AG04450 (cell line): ENCODE measurements at regions of chr14 and their contacts with region 1.

Region 1: DNA sequence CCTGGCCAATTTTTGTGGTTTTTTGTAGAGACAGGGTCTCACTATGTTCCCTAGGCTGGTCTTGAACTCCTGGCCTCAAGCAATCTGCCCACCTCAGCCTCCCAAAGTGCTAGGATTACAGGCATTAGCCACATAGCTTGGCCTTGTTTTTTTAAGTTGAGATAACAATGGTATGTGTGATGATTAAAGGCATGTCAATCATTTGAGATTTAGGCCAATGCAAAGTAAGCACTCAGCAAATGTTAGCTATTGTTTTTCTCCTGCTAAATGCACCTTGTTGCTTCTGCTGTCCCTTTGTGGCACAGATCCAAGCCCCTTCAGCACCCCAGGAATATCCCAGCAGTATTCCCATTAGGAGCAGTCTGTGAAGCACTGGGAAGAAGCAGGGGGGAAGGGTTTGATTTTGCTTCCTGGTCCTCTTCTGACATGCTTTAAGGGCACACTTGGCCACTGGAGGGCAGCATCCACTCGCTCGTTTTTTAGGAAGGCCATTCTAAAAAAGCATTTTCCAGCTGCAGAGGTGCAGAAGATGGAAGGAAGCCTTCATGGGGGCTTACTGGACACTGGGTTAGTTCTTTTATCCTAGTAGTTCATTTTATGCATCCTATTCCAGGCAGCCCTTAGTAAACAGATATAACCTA is 70.2 kb upstream of the ZFP36L1 start:
- DNase-seq: peak; percentile 55
- H3K4me3 ChIP-seq: no peak overlapping the region
- H3K27ac ChIP-seq: no peak overlapping the region
- H3K27me3 ChIP-seq: no peaks in the 10 kb centered on the region
- CTCF ChIP-seq: peak; percentile 82

Region 2: GRCh38 chr14:68814376-68815230 is 48.5 kb before region 1 on chr14:
- CTCF ChIA-PET with region 1: no interaction called
- POLR2A ChIA-PET with region 1: no interaction called
- DNase-seq: no peak
- H3K4me3 ChIP-seq: peak overlapping the region; percentile 43
- H3K27ac ChIP-seq: peak overlapping the region; percentile 95
- H3K27me3 ChIP-seq: no peaks in the 10 kb centered on the region
- CTCF ChIP-seq: no peak

Region 3: DNA sequence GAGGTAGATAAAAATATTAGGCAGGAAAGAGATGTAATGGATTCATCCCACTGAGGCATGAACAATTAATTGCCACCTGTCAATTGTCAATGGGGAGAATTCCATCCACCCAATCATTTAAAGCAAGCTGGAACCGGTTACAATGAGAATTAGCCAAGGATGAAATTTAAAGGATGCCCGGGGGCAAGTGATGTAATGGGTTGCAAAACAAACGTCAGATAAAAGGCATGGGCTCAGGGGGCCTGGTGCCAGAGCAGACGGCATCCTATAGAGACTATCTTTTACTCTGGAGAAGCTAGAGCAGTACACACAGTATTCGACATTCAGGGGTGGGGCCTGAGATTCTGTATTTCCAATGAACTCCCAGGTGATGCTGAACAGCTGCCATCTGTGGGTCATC is 10.3 kb after region 1 on chr14:
- CTCF ChIA-PET with region 1: interaction called, 16 read pairs
- POLR2A ChIA-PET with region 1: no interaction called
- DNase-seq: no peak
- H3K4me3 ChIP-seq: no peak overlapping the region
- H3K27ac ChIP-seq: no peak overlapping the region
- H3K27me3 ChIP-seq: no peaks in the 10 kb centered on the region
- CTCF ChIP-seq: no peak

Region 4: DNA sequence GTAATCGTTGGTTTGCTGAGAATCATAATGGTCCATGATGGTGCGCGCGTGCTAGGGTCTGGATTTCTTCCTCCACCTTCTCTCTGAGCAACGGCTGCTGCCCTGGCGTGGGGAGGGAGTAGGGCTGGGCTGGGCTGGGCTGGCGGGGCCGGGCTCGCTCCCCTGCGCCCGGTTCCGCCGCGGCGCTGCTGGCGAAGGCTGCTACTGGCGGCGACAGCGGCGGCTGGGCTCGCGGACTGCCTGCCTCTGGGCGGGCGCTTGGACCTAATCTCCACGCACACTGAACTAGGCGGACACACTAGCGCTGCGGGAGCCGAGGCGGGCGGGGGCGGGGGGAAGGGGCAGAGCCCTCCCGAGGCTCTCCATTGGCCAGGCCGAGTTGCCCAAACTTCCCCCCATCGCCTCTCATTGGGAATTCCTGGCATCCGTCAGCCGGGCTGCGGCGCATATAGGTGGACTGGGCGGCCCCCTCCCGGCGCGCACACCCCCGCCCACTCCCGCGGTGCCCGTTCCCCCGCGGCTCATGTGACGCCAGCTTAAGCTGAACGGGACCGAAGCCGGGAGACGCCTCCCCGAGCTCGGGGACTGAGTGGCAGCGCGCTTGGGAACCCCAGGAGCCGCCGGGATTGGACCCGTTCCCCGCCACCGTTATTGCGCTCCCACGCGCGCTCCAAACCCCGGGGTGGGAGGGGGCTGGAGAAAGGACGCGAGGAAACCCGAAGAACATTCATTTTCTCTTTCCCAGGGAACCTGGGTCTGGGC is 116.1 kb after region 1 on chr14 and contains the start of gene ACTN1:
- CTCF ChIA-PET with region 1: no interaction called
- POLR2A ChIA-PET with region 1: no interaction called
- DNase-seq: peak; percentile 94
- H3K4me3 ChIP-seq: peak within 1 kb of the TSS; percentile 97
- H3K27ac ChIP-seq: peak within 1 kb of the TSS; percentile 100
- H3K27me3 ChIP-seq: no peaks in the 10 kb centered on the region
- CTCF ChIP-seq: no peak
- polyA plus RNA-seq, gene ACTN1: 641 and 751 TPM in 2 replicates

Region 5: GRCh38 chr14:69090187-69090789 is 227.2 kb after region 1 on chr14:
- CTCF ChIA-PET with region 1: interaction called, 12 read pairs
- POLR2A ChIA-PET with region 1: no interaction called
- DNase-seq: no peak
- H3K4me3 ChIP-seq: no peak overlapping the region
- H3K27ac ChIP-seq: no peak overlapping the region
- H3K27me3 ChIP-seq: no peaks in the 10 kb centered on the region
- CTCF ChIP-seq: peak; percentile 85

Region 6: GRCh38 chr14:69101331-69101826 is 238.3 kb after region 1 on chr14:
- CTCF ChIA-PET with region 1: interaction called, 76 read pairs
- POLR2A ChIA-PET with region 1: interaction called, 8 read pairs
- DNase-seq: peak; percentile 55
- H3K4me3 ChIP-seq: no peak overlapping the region
- H3K27ac ChIP-seq: no peak overlapping the region
- H3K27me3 ChIP-seq: no peaks in the 10 kb centered on the region
- CTCF ChIP-seq: peak; percentile 82

Region 7: DNA sequence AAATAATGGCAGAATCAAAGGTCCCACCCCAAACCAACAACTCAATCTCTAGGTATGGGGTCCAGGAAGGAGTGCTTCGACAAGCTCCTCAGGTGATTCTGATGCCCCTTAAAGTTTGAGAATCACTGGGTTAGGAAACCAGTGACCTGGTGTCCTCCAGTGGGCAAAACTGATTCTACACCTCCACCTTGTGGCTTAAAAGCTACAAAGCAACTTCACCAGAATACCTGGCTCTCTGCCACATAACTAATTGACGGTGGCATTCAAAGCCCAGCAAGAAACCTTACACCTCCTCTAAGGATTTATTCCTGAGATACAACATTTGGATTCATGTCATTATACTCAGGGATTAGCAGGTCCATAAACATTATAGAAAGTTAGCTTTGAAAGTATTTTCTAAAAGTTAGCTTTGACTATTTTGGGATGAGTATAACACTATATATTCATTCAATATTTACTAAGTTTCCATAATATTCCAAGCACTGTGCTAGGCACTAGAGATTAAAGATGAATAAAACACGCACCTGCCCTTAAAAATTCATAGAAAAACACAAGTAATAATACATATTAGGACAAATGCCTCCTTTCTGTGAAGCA is 244.4 kb after region 1 on chr14:
- CTCF ChIA-PET with region 1: interaction called, 76 read pairs
- POLR2A ChIA-PET with region 1: interaction called, 4 read pairs
- DNase-seq: peak; percentile 51
- H3K4me3 ChIP-seq: no peak overlapping the region
- H3K27ac ChIP-seq: no peak overlapping the region
- H3K27me3 ChIP-seq: no peaks in the 10 kb centered on the region
- CTCF ChIP-seq: peak; percentile 73